ENCODE measurements at regions of chr3 and their contacts with region 1.

Region 1: DNA sequence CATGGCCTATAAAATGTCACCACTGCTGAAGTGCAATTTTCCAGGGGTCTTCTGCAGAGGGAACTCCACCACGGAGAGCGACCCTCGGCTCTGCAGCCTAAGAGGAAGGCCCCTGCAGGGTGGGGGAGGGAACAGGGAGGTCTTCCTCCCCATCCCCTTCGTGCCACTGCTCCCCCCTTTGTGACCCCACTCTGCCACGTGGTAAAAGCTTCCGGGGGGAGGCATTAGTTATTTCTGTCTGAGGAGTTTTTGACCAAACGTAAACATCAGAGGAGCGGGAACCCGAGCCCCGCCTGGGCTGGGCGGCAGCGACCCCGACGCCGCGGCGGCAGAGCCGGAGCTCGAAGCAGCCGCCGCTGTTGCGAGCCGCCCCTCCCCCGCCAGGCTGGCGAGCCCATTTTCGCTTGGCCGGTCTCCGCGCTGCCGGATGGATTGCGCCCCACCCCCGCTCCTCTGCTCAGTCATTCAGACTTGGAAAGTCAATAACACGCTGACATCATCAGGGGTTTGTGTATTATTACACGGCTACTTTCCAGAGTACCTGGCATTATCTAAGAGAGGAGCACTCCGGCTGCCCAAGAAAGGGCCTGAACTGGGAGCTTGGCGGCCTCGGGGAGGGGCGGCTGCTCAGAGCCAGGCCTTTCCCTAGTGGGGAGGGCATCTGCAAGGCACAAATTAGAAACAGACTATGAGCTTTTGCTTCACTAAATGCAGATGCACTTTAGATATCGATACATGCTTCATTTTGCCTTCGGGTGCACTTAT is 162.5 kb upstream of the TBL1XR1 start:
- DNase-seq: peak; percentile 95 to 98 (median 96)
- ATAC-seq: peak; percentile 92
- H3K4me3 ChIP-seq: peak overlapping the region; percentile 75
- H3K4me3 Mint-ChIP-seq: peak overlapping the region; percentile 77 to 98 (median 94)
- H3K27ac ChIP-seq: peak overlapping the region; percentile 90
- H3K27ac Mint-ChIP-seq: peak overlapping the region; percentile 96 to 100 (median 98)
- H3K4me1 ChIP-seq: peaks cover 31 to 34% of the 10 kb centered on the region in 2 donors
- H3K4me1 Mint-ChIP-seq: peaks cover 28 to 63% (median 54%) of the 10 kb centered on the region in 7 donors
- H3K27me3 ChIP-seq: no peaks in the 10 kb centered on the region
- H3K27me3 Mint-ChIP-seq: peaks cover 0 to 2% (median 0%) of the 10 kb centered on the region in 5 donors

Region 2: DNA sequence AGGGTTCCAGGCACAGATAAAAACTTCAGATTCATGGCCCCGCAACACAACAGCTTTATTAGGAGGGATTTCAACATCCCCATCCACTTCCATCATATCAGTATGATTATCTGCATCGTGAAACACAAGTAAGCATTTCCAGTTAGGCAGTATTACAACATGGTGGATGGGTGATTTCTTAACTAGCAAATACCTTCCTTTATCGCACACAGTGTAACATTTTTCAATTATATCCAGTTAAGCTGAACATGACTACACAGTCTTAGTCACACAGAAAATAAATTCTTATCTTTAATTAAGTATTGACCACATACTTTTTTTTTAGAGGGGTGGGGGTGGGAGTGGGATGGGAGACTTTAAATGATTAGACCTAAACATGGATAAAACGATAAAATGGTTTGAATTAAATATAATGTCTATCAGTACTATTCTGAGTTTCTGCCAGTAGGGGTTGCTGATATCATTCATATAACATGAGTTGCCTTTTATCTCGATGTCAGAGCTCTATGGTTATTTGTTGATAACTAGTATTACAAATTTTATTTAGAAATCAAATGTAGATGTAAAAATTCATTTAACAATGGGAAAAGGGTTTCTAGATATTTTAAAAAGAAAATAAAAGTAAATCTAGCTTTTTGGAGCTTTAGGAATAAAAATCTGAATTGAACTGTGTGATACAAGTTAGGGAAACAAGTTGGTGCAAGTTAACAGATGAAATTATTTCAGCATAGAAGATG is 309.1 kb before region 1 on chr3:
- CTCF ChIA-PET with region 1: interaction called, 18 read pairs
- POLR2A ChIA-PET with region 1: interaction called, 11 read pairs
- intact Hi-C with region 1: loop called (anchors 1 kb)
- DNase-seq: peak in 7 of 9 donors; percentile 35 to 67 (median 52)
- ATAC-seq: peak; percentile 87
- H3K4me3 ChIP-seq: no peak overlapping the region
- H3K4me3 Mint-ChIP-seq: no peak overlapping the region
- H3K27ac ChIP-seq: no peak overlapping the region
- H3K27ac Mint-ChIP-seq: peak overlapping the region in 4 of 9 donors; percentile 17 to 56 (median 32)
- H3K4me1 ChIP-seq: peaks cover 0 to 6% of the 10 kb centered on the region in 2 donors
- H3K4me1 Mint-ChIP-seq: peaks cover 0 to 23% (median 18%) of the 10 kb centered on the region in 7 donors
- H3K27me3 ChIP-seq: no peaks in the 10 kb centered on the region
- H3K27me3 Mint-ChIP-seq: no peaks in the 10 kb centered on the region

Region 3: DNA sequence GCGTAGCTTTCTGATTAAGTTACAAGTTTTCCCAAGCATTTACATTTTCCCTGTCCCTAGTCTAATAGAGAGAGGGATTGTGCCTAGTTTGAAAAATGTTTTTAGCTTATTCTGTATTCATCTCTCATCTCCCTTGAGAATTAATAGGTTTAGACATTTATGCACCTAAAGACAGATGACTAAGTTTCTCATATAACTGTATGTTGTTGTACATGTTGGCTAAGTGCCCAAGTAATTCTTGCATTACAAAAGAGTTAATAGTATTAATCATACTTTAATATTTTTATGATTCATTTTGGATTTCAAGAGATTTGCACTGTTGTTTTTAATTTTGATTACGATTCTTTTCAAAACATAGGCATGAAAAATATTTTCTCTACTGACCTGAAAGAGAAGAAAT is 53.5 kb before region 1 on chr3:
- CTCF ChIA-PET with region 1: no interaction called
- POLR2A ChIA-PET with region 1: no interaction called
- intact Hi-C with region 1: loop called in 1 of 2 experiments (anchors 5 kb)
- DNase-seq: no peak
- ATAC-seq: no peak
- H3K4me3 ChIP-seq: no peak overlapping the region
- H3K4me3 Mint-ChIP-seq: no peak overlapping the region
- H3K27ac ChIP-seq: no peak overlapping the region
- H3K27ac Mint-ChIP-seq: no peak overlapping the region
- H3K4me1 ChIP-seq: no peaks in the 10 kb centered on the region
- H3K4me1 Mint-ChIP-seq: peaks cover 0 to 4% (median 0%) of the 10 kb centered on the region in 7 donors
- H3K27me3 ChIP-seq: no peaks in the 10 kb centered on the region
- H3K27me3 Mint-ChIP-seq: peaks cover 0 to 4% (median 0%) of the 10 kb centered on the region in 5 donors

Region 4: GRCh38 chr3:177448987-177449975 is 89.5 kb after region 1 on chr3:
- CTCF ChIA-PET with region 1: no interaction called
- POLR2A ChIA-PET with region 1: no interaction called
- intact Hi-C with region 1: loop called in 1 of 2 experiments (anchors 5 kb)
- DNase-seq: no peak
- ATAC-seq: peak; percentile 82
- H3K4me3 ChIP-seq: no peak overlapping the region
- H3K4me3 Mint-ChIP-seq: peak overlapping the region in 8 of 10 donors; percentile 13 to 74 (median 44)
- H3K27ac ChIP-seq: no peak overlapping the region
- H3K27ac Mint-ChIP-seq: peak overlapping the region in 3 of 9 donors; percentile 59 to 73 (median 65)
- H3K4me1 ChIP-seq: peaks cover 5 to 20% of the 10 kb centered on the region in 2 donors
- H3K4me1 Mint-ChIP-seq: peaks cover 6 to 24% (median 16%) of the 10 kb centered on the region in 7 donors
- H3K27me3 ChIP-seq: no peaks in the 10 kb centered on the region
- H3K27me3 Mint-ChIP-seq: no peaks in the 10 kb centered on the region

Region 5: DNA sequence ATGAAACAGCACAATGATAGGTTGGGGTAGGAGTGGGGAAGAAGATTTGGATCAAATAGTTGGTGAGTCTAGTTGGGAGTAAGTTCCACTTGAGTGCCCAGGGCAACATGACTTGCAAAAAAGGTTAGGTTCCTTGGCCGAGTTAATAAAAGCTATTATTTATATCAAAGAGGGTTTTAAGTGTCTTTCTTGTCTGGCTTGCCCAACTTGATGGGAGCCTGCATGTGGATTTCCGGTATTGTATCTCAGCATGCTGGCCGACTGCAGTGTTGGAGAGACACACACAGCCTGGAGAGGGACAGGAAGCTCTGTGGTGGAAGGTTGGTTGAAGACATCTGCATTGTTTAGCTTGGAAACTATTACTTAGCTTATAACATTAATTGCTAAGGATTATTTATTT is 287.0 kb after region 1 on chr3:
- CTCF ChIA-PET with region 1: no interaction called
- POLR2A ChIA-PET with region 1: interaction called, 4 read pairs
- intact Hi-C with region 1: loop called in 1 of 2 experiments (anchors 5 kb)
- DNase-seq: peak in 4 of 9 donors; percentile 21 to 43 (median 34)
- ATAC-seq: peak; percentile 59
- H3K4me3 ChIP-seq: no peak overlapping the region
- H3K4me3 Mint-ChIP-seq: peak overlapping the region in 9 of 10 donors; percentile 21 to 78 (median 53)
- H3K27ac ChIP-seq: no peak overlapping the region
- H3K27ac Mint-ChIP-seq: peak overlapping the region in 5 of 9 donors; percentile 16 to 70 (median 51)
- H3K4me1 ChIP-seq: peaks cover 42 to 58% of the 10 kb centered on the region in 2 donors
- H3K4me1 Mint-ChIP-seq: peaks cover 39 to 68% (median 63%) of the 10 kb centered on the region in 7 donors
- H3K27me3 ChIP-seq: no peaks in the 10 kb centered on the region
- H3K27me3 Mint-ChIP-seq: no peaks in the 10 kb centered on the region

Region 6: GRCh38 chr3:178084938-178085816 is 725.4 kb after region 1 on chr3:
- CTCF ChIA-PET with region 1: no interaction called
- POLR2A ChIA-PET with region 1: no interaction called
- intact Hi-C with region 1: loop called in 1 of 2 experiments (anchors 1 kb)
- DNase-seq: peak in 8 of 9 donors; percentile 15 to 84 (median 72)
- ATAC-seq: peak; percentile 95
- H3K4me3 ChIP-seq: no peak overlapping the region
- H3K4me3 Mint-ChIP-seq: peak overlapping the region; percentile 65 to 85 (median 76)
- H3K27ac ChIP-seq: peak overlapping the region; percentile 39
- H3K27ac Mint-ChIP-seq: peak overlapping the region; percentile 26 to 95 (median 85)
- H3K4me1 ChIP-seq: peaks cover 0 to 32% of the 10 kb centered on the region in 2 donors
- H3K4me1 Mint-ChIP-seq: peaks cover 16 to 68% (median 54%) of the 10 kb centered on the region in 7 donors
- H3K27me3 ChIP-seq: no peaks in the 10 kb centered on the region
- H3K27me3 Mint-ChIP-seq: no peaks in the 10 kb centered on the region

Measured in naive thymus-derived CD4-positive, alpha-beta T cell (primary cell).